ENCODE measurements at regions of chr12 and their contacts with region 1.

Region 1: DNA sequence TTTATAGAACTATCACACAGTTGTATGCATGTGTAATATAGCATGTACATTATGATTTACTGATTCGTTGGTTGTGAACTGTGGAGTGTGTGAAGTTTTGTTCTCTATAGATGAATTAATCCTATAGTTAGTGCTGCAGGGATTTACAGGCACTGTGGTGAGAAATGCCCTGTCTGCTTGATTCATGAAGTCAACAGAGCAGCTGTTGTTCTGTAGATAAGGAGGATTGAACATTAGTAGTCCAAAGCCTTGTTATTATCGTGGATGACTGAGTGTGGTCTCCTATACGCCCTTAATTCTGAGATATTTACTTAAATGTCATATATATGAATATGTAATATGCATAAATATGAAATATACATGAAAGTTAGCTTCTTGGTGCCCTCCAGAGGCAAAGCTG is 98.3 kb downstream of the DNAH10 start:
- DNase-seq: no peak
- H3K4me3 ChIP-seq: no peak overlapping the region
- H3K4me3 Mint-ChIP-seq: no peak overlapping the region
- H3K27ac Mint-ChIP-seq: no peak overlapping the region
- H3K4me1 ChIP-seq: no peaks in the 10 kb centered on the region
- H3K4me1 Mint-ChIP-seq: no peaks in the 10 kb centered on the region
- H3K27me3 ChIP-seq: no peaks in the 10 kb centered on the region
- H3K27me3 Mint-ChIP-seq: no peaks in the 10 kb centered on the region
- CTCF ChIP-seq: no peak

Region 2: GRCh38 chr12:123801573-123802178 is 58.7 kb before region 1 on chr12:
- CTCF ChIA-PET with region 1: no interaction called
- POLR2A ChIA-PET with region 1: no interaction called
- intact Hi-C with region 1: loop called (anchors 10 kb)
- DNase-seq: no peak
- H3K4me3 ChIP-seq: no peak overlapping the region
- H3K4me3 Mint-ChIP-seq: no peak overlapping the region
- H3K27ac Mint-ChIP-seq: no peak overlapping the region
- H3K4me1 ChIP-seq: no peaks in the 10 kb centered on the region
- H3K4me1 Mint-ChIP-seq: no peaks in the 10 kb centered on the region
- H3K27me3 ChIP-seq: no peaks in the 10 kb centered on the region
- H3K27me3 Mint-ChIP-seq: peaks cover 6% of the 10 kb centered on the region
- CTCF ChIP-seq: peak in 1 of 2 experiments; percentile 40